PC-3 (cell line): ENCODE measurements at regions of chr2 and their contacts with region 1.

Region 1: DNA sequence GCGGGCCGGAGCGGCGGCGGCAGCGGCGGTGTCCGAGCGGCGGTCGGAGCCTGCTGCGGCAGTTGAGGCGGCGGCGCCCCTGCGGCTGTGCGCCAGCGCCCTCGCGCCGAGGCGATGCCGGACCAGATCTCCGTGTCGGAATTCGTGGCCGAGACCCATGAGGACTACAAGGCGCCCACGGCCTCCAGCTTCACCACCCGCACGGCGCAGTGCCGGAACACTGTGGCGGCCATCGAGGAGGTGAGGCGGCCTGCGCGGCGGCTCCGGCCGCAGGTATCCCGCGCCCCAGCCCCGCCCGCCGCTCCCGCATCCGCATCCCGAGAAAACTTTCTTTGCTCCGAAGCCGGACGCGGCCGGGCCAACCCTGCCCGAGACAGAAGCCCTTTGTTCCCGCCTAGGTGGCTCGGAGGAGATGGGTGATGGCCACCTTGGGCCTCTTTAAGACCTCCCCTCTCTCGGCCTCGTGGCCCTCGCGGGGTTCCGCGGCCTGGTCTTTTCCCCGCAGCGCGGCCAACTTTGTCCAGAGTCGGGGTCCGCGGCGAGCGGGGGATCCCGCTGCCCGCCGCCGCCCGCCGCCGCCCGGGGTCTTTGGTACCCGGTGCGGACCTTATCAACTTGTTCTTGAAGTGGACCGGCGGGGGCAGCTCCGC is 504 bp downstream of the ASAP2 start:
- DNase-seq: no peak
- ATAC-seq: peak; percentile 9
- H3K4me3 ChIP-seq: peak overlapping the region; percentile 89
- H3K27ac ChIP-seq: peak overlapping the region; percentile 80
- H3K4me1 ChIP-seq: peaks cover 34% of the 10 kb centered on the region
- H3K27me3 ChIP-seq: no peaks in the 10 kb centered on the region
- CTCF ChIP-seq: no peak

Region 2: DNA sequence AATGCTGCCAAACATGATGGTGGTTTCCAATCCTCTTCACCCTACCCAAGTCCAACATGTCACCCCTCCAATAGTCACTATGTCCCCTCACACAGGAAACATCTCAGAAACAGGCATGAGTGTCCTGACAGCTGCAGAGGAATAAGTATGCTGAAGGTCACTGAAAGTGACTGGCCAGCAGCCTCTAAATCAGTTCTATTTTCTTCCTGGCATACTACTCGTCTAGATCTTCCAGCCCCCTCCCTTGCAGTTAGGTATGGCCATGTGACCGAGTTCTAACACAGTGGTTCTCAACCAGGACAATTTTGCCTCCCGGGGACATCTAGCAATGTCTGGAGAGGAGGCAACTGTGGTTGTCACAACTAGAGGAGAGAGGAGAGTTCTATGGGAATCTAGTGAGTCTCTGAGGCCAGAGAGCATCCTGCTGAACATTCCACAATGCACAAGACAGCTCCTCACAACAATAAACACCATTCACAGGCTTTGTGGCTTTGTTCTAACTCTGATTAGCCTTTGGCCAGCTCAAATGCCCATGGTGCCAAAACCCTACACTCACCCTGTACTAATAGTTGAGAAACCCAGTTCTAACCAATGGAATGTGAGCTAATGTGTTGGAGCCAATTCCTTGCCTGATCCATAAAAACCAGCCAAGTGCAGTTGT is 537.8 kb before region 1 on chr2:
- CTCF ChIA-PET with region 1: no interaction called
- POLR2A ChIA-PET with region 1: no interaction called
- intact Hi-C with region 1: no loop called
- DNase-seq: no peak
- ATAC-seq: no peak
- H3K4me3 ChIP-seq: no peak overlapping the region
- H3K27ac ChIP-seq: no peak overlapping the region
- H3K4me1 ChIP-seq: no peaks in the 10 kb centered on the region
- H3K27me3 ChIP-seq: no peaks in the 10 kb centered on the region
- CTCF ChIP-seq: no peak

Region 3: DNA sequence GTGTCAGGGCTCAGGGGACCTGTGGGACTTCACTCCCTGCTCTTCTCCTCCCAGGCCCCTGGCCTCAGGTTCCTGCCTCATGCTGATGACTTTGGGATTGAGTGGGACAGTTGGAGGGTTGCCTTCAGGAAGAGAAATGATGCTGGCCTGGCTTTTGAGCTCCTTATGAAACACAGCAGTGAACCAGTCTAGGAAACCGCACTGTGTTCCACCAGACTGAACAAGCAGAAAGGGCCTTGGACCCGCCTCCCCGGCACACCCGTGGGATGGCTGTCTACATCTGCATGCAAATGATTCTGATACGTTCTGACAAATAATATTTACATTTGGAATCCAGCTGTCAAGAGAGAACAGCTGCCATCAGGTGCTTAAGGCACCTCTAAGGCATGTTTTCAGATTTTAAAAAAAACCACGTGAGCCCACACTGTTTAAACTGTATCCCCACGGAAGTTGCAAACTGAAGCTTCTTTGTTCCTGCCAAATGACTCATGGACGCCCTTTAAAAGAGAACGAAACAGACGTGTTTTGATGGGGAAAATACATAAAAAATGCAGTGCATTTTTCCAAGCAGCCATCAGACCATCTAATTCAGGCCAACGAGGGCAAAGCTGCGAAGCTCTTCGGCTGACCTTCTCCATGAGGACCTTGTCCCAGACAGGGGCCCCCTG is 28.1 kb before region 1 on chr2:
- CTCF ChIA-PET with region 1: interaction called, 3 read pairs
- POLR2A ChIA-PET with region 1: interaction called, 9 read pairs
- intact Hi-C with region 1: loop called (anchors 1 kb)
- DNase-seq: peak; percentile 92
- ATAC-seq: peak; percentile 64
- H3K4me3 ChIP-seq: peak overlapping the region; percentile 55
- H3K27ac ChIP-seq: peak overlapping the region; percentile 97
- H3K4me1 ChIP-seq: peaks cover 52% of the 10 kb centered on the region
- H3K27me3 ChIP-seq: no peaks in the 10 kb centered on the region
- CTCF ChIP-seq: no peak